ENCODE measurements at regions of chr16 and their contacts with region 1.

Region 1: GRCh38 chr16:68843482-68844210 is at the start of gene TANGO6:
- DNase-seq: peak; percentile 88 to 91
- H3K4me3 ChIP-seq: peak within 1 kb of the TSS; percentile 91
- H3K4me3 Mint-ChIP-seq: peak within 1 kb of the TSS; percentile 70
- H3K27ac Mint-ChIP-seq: peak within 1 kb of the TSS; percentile 74
- H3K4me1 ChIP-seq: peaks cover 4% of the 10 kb centered on the region; the same call in 1 of the 2 replicates
- H3K4me1 Mint-ChIP-seq: peaks cover 6% of the 10 kb centered on the region
- H3K27me3 ChIP-seq: no peaks in the 10 kb centered on the region
- H3K27me3 Mint-ChIP-seq: no peaks in the 10 kb centered on the region
- CTCF ChIP-seq: peak; percentile 65 to 78
- total RNA-seq, gene TANGO6: 17.0 and 18.2 TPM in 2 replicates

Region 2: GRCh38 chr16:68760671-68761275 is 82.9 kb before region 1 on chr16:
- CTCF ChIA-PET with region 1: no interaction called
- POLR2A ChIA-PET with region 1: no interaction called
- intact Hi-C with region 1: no loop called
- DNase-seq: no peak
- H3K4me3 ChIP-seq: no peak overlapping the region
- H3K4me3 Mint-ChIP-seq: no peak overlapping the region
- H3K27ac Mint-ChIP-seq: peak overlapping the region; percentile 31
- H3K4me1 ChIP-seq: peaks cover 37% of the 10 kb centered on the region
- H3K4me1 Mint-ChIP-seq: peaks cover 62% of the 10 kb centered on the region
- H3K27me3 ChIP-seq: no peaks in the 10 kb centered on the region
- H3K27me3 Mint-ChIP-seq: no peaks in the 10 kb centered on the region
- CTCF ChIP-seq: no peak

Region 3: DNA sequence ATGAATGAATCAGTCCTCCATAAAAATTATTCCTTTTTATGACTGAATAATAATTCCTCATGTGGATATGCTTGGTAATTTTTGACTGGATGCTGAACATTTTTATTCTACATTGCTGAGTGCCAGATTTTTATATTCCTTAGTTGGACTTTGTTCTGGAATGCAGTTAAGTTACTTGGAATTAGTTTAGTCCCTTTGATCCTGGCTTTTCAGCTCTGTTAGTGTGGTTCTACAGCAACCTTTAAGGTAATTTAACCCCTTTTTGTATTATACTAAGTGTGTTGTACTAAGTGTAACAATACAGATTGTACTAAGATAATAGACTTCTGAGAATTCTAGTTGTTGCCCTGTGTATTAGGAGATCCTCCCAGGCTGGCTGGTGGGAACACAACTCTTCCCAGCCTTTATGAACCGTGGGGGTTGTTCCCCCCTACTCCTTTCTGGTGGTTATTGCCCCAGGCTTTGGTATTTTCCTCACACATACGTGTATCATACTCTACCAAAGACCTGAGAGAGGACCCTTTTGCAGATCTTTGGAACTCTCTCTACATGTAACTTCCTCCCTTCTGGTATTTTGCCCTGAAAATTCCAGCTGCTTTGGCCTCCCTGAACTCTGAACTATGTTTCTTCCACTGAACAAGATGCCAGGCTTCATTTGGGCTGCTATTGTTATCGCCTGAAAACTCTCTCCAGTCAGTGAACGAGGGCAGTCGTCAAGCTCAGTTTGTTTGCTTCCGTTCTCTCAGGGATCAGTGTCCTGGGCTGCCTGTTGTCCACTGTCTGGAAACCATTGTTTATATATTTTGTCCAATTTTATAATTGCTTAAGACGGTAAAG is 30.2 kb after region 1 on chr16:
- CTCF ChIA-PET with region 1: interaction called, 7 read pairs
- POLR2A ChIA-PET with region 1: no interaction called
- intact Hi-C with region 1: loop called (anchors 1 kb)
- DNase-seq: peak; percentile 71 to 76
- H3K4me3 ChIP-seq: no peak overlapping the region
- H3K4me3 Mint-ChIP-seq: peak overlapping the region; percentile 68
- H3K27ac Mint-ChIP-seq: peak overlapping the region; percentile 99
- H3K4me1 ChIP-seq: peaks cover 52% of the 10 kb centered on the region
- H3K4me1 Mint-ChIP-seq: peaks cover 29% of the 10 kb centered on the region
- H3K27me3 ChIP-seq: no peaks in the 10 kb centered on the region
- H3K27me3 Mint-ChIP-seq: no peaks in the 10 kb centered on the region
- CTCF ChIP-seq: no peak

Region 4: DNA sequence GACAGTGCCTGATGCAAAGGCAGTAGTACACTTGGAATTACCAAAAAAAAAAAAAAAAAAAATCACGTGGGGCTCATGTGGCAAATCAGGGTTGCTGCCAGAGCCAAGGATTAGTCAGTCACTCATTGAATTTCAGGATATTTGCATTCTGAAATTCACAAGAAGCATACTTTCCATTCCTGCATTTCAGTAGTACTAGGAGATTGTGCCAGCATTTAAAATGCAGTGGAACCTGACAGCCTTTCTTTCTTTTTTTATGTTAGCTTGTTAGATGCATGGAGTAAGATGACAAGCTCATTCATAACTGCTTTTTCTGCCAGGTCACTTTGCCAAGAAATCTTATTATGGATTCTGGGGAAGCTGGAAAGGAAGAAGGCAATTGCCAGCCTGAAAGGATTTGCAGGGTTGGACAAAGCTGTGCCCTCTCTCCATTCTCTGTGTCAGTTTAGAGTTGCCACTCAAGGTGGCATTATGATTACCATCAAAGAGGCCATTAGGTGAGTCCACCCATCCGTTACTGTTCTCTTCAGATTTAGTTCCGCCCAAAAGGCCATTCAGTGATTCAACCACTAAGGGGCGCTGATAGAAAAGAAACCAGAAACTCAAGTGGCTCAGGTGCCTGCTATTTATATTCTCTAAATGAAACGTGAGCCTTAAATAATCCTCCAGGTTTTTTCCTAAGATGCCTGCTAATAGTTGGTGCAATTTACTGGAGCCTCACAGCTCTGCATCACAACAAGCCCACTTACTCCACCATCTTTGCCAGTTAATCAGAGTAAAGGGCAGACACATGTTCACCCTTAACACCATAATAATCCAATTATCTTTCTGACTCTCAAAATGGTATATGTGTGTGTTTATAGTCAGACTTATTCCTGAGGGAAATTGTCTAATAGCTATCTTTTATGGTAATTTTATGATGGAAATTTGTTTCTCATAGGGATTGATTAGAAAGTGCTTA is 58.6 kb after region 1 on chr16:
- CTCF ChIA-PET with region 1: no interaction called
- POLR2A ChIA-PET with region 1: no interaction called
- intact Hi-C with region 1: loop called (anchors 1 kb)
- DNase-seq: peak; percentile 57 to 79
- H3K4me3 ChIP-seq: no peak overlapping the region
- H3K4me3 Mint-ChIP-seq: no peak overlapping the region
- H3K27ac Mint-ChIP-seq: peak overlapping the region; percentile 29
- H3K4me1 ChIP-seq: peaks cover 12% of the 10 kb centered on the region
- H3K4me1 Mint-ChIP-seq: peaks cover 14% of the 10 kb centered on the region
- H3K27me3 ChIP-seq: no peaks in the 10 kb centered on the region
- H3K27me3 Mint-ChIP-seq: no peaks in the 10 kb centered on the region
- CTCF ChIP-seq: peak; percentile 73 to 87

Region 5: DNA sequence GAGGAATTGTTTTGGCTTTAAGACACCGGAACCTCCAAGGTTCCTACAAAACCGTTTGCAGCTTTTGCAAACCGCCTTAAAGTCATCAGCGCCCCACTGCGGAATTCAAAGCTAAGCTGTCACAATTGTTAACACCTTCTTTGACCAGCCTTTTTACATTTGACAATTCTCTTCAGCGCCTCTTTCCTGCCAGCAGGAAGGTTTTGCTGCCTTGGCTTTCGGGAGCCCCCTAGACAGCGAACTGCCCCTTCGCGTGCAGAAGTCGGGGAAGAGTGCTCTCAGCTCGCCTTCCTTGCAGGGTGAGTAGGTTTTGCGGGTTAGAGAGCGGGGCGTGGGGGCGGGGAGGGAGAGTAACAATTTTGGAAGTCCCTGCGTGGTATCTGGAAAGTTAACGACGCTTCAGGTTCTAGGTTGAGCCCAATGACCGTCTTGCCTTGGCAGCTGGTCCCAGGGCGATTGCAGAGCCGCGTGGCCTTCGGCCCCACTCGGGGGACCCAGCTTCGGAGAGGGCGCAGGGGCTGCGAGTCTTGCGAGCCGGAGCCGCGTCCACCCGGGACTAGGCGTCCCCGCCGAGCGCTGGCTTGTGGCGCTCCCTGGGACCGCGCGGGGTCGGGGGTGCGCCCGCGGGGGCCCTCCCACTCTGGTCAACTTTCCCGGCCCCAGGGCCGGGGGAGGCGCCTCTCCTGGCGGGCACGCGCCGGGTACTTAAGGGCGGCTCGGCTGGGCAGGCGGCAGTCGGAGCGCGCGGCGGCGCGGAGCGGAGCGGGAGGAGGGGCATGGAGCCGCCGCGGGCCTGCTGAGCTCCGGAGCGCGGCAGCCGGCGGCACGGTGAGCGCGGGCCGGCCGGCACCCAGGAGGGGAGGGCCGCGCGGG is 262.1 kb after region 1 on chr16 and contains the start of gene HAS3:
- CTCF ChIA-PET with region 1: interaction called, 15 read pairs
- POLR2A ChIA-PET with region 1: interaction called, 3 read pairs
- intact Hi-C with region 1: loop called (anchors 1 kb)
- DNase-seq: peak; percentile 73 to 89
- H3K4me3 ChIP-seq: peak within 1 kb of the TSS; percentile 50
- H3K4me3 Mint-ChIP-seq: peak within 1 kb of the TSS; percentile 92
- H3K27ac Mint-ChIP-seq: peak within 1 kb of the TSS; percentile 61
- H3K4me1 ChIP-seq: peaks cover 9% of the 10 kb centered on the region
- H3K4me1 Mint-ChIP-seq: peaks cover 20% of the 10 kb centered on the region
- H3K27me3 ChIP-seq: no peaks in the 10 kb centered on the region
- H3K27me3 Mint-ChIP-seq: no peaks in the 10 kb centered on the region
- CTCF ChIP-seq: peak; percentile 33 to 60
- total RNA-seq, gene HAS3: 8.3 TPM in 2 replicates

Region 6: GRCh38 chr16:69123910-69124309 is 280.3 kb after region 1 on chr16:
- CTCF ChIA-PET with region 1: interaction called, 25 read pairs
- POLR2A ChIA-PET with region 1: no interaction called
- intact Hi-C with region 1: loop called (anchors 1 kb)
- DNase-seq: peak; percentile 69 to 79
- H3K4me3 ChIP-seq: no peak overlapping the region
- H3K4me3 Mint-ChIP-seq: no peak overlapping the region
- H3K27ac Mint-ChIP-seq: no peak overlapping the region
- H3K4me1 ChIP-seq: no peaks in the 10 kb centered on the region
- H3K4me1 Mint-ChIP-seq: no peaks in the 10 kb centered on the region
- H3K27me3 ChIP-seq: no peaks in the 10 kb centered on the region
- H3K27me3 Mint-ChIP-seq: no peaks in the 10 kb centered on the region
- CTCF ChIP-seq: peak; percentile 67 to 83

Measured in Caco-2 (cell line).